GM10248 (cell line): ENCODE measurements at regions of chr10 and their contacts with region 1.

Region 1: GRCh38 chr10:114470956-114471905 is 66.9 kb upstream of the AFAP1L2 start:
- DNase-seq: peak; percentile 71
- CTCF ChIP-seq: peak; percentile 97

Region 2: DNA sequence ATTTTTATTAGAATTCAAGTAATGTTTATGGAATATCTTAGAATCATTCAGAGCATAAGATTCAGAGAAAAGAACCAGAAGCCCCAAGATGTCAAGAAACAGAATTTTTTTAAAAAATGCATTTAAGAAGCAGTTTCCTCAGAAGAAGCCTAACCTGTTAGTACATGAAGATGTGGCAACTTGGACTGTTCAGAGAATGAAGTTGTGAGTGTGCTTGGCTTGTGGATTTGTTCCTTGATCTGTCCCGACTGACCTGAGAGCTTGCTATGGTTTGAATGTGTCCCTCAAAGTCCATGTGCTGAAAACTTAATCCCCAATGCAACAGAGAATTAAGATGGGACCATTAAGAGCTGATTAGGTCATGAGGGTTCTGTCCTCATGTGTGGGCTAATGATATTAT is 53.1 kb before region 1 on chr10:
- CTCF ChIA-PET with region 1: no interaction called
- POLR2A ChIA-PET with region 1: no interaction called
- DNase-seq: no peak
- CTCF ChIP-seq: no peak

Region 3: GRCh38 chr10:114458955-114459354 is 12.3 kb before region 1 on chr10:
- CTCF ChIA-PET with region 1: interaction called, 41 read pairs
- POLR2A ChIA-PET with region 1: no interaction called
- DNase-seq: peak; percentile 48
- CTCF ChIP-seq: peak; percentile 41

Region 4: GRCh38 chr10:114499630-114500190 is 28.5 kb after region 1 on chr10:
- CTCF ChIA-PET with region 1: interaction called, 38 read pairs
- POLR2A ChIA-PET with region 1: no interaction called
- DNase-seq: peak; percentile 24
- CTCF ChIP-seq: no peak

Region 5: DNA sequence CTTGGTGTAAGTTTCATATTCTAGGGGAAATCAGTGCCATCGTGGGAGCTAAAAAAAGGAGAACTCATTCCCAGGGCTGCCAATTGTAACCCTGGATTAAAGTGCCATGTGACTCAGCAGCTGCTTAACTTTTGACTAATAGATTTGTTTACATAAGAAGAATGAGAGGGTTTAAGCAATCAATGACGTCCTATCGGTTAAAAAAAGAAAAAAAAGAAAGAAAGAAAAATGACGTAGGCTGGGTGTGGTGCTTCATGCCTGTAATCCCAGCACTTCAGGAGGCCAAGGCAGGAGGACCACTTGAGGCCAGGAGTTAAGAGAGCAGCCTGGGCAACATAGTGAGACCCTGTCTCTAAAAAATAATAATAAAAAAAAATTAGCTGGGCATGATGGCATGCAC is 49.2 kb after region 1 on chr10:
- CTCF ChIA-PET with region 1: interaction called, 27 read pairs
- POLR2A ChIA-PET with region 1: no interaction called
- DNase-seq: no peak
- CTCF ChIP-seq: no peak

Region 6: DNA sequence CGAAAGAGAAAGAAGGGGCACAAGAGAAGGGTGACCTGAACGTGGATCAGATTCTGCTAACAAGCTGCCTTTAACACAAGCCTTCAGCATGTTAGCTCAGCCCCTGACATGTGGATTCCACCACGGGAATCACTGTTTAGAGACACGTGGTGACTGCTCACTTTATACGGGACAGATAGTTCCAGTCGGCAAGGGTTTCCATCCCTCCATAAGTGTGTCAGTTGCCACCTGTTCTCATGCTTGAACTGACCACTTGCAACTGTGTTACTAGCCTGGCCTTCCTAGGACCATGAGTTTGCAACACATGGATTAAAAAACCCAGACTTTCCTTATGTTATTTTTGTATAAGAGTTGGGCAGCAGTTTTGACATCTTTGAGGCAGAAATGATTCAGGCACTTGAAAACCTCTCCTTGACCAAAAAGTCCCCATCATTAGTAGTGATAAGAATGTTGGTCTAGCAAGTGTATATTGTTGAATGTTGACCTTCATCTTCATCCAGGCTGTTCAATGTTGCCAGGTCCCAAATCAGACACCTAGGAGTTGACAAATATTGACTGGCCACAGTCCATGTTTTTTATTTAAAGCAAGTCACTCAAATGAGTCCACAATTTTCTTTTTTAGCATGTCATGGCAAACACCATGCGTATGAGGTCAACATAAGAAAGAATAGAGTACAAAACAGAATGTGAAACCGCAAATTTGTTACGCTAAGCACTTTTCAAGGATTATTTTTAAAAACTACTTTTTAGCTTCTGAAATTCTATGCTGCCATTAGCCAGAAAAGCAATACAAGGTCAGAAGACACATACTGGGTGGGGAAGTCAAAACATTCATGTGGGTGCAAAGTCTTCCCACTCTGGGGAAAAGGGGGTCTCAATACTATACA is 85.2 kb after region 1 on chr10:
- CTCF ChIA-PET with region 1: interaction called, 14 read pairs
- POLR2A ChIA-PET with region 1: no interaction called
- DNase-seq: no peak
- CTCF ChIP-seq: no peak